Adrenal gland (tissue), 19 donors: ENCODE measurements at regions of chr3 and their contacts with region 1.

Region 1: GRCh38 chr3:184513276-184514170 is 48.1 kb upstream of the EPHB3 start:
- DNase-seq: peak; percentile 84 to 94 (median 88)
- H3K4me3 ChIP-seq: peak overlapping the region in 2 of 4 donors; percentile 7 to 65
- H3K27ac ChIP-seq: peak overlapping the region in 2 of 5 donors; percentile 48 to 68
- H3K4me1 ChIP-seq: peaks cover 4 to 6% of the 10 kb centered on the region in 2 donors
- H3K27me3 ChIP-seq: peaks cover 18% of the 10 kb centered on the region
- CTCF ChIP-seq: peak; percentile 80 to 90 (median 87)
- POLR2A ChIP-seq: no peak

Region 2: DNA sequence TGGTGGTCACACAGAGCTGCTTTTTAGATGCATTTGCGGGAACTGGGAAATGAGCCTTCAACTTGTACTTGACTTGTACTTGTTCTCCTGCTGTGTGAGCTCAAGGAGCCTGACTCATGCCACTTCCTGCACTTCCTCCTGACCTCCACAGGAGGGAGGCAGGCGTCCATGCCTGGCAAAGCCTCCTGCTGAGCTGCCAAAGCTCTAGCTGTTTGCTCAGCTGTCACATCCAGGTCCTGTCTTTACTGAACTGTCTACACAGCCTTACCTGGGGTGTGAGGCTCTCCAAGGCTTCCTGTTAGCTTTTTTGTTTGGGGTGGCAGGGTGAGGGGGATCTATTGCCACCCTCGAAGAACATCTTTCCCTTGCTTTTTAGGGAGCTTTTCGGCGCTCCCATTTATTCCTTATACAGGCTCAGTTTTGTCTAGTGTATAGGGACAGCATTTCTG is 141.9 kb before region 1 on chr3:
- intact Hi-C with region 1: loop called in 1 of 2 experiments (anchors 5 kb)
- DNase-seq: peak; percentile 83 to 93 (median 89)
- H3K4me3 ChIP-seq: no peak overlapping the region
- H3K27ac ChIP-seq: no peak overlapping the region
- H3K4me1 ChIP-seq: peaks cover 10 to 36% of the 10 kb centered on the region in 2 donors
- H3K27me3 ChIP-seq: no peaks in the 10 kb centered on the region
- CTCF ChIP-seq: peak; percentile 88 to 98 (median 96)
- POLR2A ChIP-seq: no peak

Region 3: DNA sequence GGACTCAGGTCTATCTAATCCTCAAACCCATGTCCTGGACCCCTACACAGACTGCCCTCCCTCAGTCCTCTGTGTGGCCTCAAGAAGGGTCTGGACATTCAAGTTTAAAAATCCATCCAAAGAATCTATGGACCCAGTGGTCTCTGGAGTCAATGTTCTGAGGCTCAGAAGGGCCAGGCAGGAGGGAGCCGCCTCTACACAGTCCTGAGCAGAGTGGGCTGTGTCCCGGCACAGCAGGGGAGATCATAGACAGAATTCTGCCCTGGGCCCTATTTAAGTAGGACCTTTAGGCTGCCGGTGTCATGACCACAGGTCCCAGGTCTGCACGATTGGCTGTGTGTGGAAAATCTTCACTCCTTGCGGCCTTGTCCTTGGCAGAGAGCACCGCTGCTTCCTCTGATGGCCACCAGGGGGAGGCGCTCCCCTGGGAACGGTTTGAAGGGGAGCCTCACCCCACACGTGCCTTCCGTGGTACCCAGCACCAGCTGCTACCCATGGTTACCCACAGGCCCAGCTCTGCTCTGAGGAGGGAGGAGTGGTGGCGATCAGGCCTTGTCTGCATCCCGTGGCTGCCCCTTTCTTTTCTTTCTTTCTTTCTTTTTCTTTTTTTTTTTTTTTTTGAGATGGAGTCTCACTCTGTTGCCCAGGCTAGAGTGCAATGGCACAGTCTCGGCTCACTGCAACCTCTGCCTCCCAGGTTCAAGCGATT is 95.8 kb before region 1 on chr3:
- intact Hi-C with region 1: loop called in 1 of 2 experiments (anchors 5 kb)
- DNase-seq: peak; percentile 71 to 84 (median 74)
- H3K4me3 ChIP-seq: no peak overlapping the region
- H3K27ac ChIP-seq: no peak overlapping the region
- H3K4me1 ChIP-seq: no peaks in the 10 kb centered on the region
- H3K27me3 ChIP-seq: no peaks in the 10 kb centered on the region
- CTCF ChIP-seq: peak; percentile 86 to 95 (median 90)
- POLR2A ChIP-seq: no peak